ENCODE measurements at regions of chr1 and their contacts with region 1.

Region 1: DNA sequence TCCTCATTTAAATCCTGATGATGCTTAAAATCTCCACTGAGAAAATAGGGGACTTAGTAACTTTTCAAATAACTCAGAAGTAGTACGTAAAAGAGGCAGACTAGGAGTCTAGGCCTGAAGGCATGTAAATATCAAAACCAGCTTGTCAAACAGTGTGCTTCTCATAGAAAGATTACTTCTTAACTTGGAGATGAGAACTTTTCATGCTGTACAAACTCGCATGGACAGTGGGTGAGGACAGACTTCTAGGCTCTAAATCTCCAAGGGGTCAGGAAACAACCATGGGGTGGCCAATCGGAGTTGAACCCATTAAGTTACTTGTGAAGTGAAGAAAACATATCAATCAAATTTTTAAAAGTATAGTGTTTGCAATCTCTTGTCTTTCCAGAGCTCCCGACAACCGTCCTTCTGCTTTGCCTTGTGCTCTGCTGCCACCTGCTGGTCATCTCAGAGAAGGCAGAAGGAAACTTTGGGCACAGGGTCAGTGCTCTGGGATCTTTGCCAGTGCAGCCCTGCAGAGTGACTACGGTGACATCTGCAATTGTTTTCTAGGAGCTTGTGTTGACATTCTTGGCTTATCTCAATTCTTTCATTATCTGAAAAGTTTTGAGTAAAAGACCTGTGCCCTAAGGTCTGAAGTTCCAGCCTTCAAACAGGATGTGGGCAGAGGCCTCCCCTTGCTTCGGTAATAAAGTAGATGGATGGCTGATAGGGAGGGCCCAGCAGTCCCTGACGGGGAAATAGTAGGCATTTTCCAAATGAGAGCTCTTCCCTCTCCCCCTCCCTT is 105.1 kb upstream of the PDE4B start:
- DNase-seq: peak; percentile 55 to 98 (median 90)

Region 2: DNA sequence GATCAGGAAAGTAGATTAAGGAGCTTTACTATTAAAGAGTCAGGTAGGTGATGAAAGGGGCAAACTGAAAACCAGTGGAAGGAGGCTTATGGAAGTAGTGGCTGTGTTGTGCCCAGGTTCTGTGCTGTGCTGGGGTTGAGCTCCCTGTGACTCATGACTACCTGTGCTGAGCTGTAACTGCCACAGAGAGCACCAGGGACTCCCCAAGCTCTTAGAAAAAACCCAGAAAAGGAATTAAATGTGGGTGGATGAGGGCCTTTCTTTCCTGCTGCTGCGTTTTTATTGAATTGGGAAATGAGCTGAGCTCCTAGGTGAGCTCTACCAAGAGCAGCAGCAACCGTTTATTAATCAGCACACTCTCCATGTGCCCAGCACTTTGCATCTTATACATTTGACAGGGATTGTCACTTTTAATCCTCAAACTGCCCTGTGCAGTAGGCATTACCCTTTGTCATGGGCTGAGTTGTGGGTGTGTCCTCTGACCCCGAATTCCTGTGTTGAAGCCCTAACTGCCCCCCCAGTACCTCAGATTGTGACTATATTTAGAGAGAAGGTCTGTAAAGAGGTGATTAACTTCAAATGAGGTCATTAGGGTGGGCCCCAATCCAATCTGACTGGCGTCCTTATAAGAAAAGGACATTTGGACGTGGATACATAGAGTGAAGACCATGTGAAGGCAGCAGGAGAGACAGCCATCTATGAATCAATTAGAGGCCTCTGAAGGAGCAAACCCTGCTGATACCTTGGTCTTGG is 474.2 kb before region 1 on chr1:
- intact Hi-C with region 1: loop called (anchors 1 kb)
- DNase-seq: no peak

Region 3: DNA sequence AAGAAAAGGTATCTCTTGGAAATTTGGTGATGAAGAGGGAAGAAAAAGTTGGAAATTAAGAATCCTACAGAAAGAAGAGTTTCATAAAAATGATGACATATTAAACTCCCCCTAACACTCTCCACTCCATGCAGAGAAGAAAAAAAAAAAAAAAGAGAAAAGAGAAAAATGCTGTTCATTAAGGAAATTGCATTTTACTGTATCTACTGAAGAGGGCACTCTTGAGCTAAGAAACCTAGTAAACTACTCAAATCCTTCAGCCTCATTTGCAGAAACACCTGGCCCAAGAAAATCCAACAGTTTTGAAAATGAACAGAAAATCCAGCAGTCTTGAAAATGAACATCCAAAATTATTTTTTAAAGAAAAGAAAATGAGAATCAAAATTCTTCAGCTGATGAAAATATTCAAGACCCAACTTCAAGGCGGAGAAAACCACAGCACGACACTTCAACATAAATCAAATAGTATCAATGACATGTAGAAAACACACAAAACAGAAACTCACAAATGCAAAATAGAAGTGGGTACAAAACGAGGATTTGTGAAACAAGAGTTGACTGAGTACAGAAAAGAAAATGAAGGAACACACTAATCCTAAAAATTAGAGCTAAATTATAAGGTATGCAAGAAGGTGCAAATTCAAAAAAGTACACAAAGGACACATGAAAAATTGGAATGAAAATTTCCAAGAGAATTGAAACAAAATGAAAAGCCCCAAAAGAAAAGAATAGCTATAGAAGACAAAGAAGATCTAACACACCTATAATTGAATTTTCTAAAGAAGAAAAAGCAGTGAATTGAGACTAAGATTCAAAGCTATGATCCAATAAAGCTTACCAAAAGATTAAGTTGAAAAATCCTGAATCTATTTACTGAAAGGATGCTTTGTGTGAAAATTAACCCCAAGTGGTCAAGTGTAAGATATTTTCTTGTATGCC is 451.5 kb before region 1 on chr1:
- intact Hi-C with region 1: loop called (anchors 5 kb)
- DNase-seq: no peak

Region 4: DNA sequence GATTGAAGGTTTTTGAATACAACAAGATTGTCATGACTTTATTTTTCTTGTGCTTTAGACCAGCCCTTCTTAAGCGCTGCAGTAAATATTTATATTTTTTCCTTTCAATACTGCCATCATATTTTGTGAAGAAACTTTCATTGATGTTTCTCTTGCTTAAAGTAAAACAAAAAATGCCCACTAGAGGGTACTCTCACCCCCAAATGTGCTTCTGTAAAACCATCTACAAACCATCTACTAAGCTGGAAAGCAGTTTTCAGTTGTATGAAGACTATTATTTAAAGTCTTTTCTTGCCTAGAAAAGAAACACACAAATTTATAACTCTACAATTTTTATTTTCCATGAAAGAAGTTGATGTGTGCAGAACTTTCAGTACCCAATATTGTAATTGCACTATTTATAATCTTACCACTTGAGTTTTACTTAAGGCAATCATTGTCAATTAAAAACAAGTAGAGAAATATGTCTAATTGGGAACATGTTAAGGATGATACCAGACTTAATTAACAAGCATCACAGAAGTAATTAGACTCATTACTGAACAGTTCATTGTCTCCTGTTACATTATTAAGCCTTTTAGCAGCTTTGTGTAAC is 256.4 kb before region 1 on chr1:
- intact Hi-C with region 1: loop called (anchors 1 kb)
- DNase-seq: no peak

Region 5: DNA sequence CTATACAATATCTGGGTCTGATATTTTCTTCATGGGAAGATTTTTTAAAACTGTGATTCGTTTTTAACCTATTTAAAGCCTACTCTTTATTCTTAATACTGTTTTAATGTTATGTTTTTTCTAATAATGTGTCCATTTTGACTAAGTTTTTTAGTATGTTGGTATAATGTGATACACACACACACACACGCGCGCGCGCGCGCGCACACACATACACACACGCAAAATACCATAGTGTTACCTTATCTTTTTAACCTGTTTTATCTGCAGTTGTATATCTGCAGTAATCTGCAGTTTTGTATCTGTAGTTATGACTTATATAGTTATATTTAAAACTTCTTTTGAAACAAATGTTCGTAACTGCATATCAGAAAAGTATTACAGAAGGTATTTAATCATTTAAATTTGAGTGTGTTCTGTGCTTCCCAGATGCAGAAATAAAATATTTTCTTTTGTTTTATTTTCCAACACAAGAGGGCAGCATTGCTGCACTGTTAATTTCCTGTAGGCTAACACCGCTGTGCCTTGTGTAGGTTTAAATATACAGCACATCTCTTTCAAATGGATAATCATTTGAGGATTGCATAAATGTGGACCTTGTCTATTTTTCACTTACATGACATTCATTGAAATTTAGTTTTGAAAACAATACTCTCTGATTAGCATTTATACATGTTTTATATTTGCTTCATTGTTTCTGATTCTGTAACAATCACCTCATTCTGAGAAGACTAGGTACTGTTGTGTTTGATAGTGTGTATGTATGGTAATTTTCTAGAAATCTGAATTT is 271.1 kb after region 1 on chr1:
- intact Hi-C with region 1: loop called (anchors 10 kb)
- DNase-seq: no peak

Region 6: DNA sequence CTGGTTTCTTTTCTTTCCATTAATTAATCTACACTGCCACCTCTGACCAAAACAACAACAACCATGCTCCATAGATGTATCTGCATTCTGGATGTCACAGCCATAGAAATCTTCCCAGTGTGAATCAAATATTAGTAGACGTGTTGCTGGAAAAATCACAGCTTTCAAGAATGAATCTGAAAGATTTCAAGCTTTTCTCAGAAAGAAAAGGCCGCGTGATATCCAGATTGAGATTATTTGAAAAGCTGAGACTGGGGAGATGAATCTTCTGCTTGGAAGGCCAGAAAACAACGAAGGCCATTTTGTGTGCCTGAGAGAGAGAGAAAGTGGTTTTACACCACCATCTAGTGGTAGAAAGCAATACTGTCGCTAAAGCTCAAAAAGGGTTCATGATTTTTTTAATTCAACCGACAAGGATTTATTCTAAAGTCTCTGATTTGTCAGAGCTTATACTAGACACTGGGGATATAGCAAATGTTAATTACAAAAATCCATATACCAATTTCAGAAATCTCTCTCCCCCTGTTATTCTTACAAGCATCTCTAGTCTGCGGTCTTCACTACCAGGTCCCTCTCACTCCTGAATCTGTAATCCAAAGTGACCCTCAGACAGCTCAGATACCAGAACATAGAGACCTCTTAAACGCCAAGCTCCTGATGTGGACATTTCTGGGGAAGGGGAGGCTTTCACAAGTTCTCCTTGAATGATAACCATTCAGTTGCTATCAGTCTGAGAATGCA is 758.8 kb after region 1 on chr1:
- intact Hi-C with region 1: loop called (anchors 5 kb)
- DNase-seq: peak in 1 of 10 donors; percentile 11